Naive thymus-derived CD4-positive, alpha-beta T cell (primary cell): ENCODE measurements at regions of chr11 and their contacts with region 1.

Region 1: GRCh38 chr11:1832211-1832919 is 2.4 kb upstream of the SYT8 start:
- DNase-seq: peak; percentile 44 to 86 (median 62)
- ATAC-seq: peak; percentile 77
- H3K4me3 ChIP-seq: no peak overlapping the region
- H3K4me3 Mint-ChIP-seq: peak overlapping the region in 2 of 10 donors; percentile 20 to 42
- H3K27ac ChIP-seq: no peak overlapping the region
- H3K27ac Mint-ChIP-seq: peak overlapping the region in 1 of 9 donors; percentile 14
- H3K4me1 ChIP-seq: no peaks in the 10 kb centered on the region
- H3K4me1 Mint-ChIP-seq: peaks cover 0 to 1% (median 0%) of the 10 kb centered on the region in 7 donors
- H3K27me3 ChIP-seq: no peaks in the 10 kb centered on the region
- H3K27me3 Mint-ChIP-seq: peaks cover 0 to 11% (median 5%) of the 10 kb centered on the region in 5 donors

Region 2: DNA sequence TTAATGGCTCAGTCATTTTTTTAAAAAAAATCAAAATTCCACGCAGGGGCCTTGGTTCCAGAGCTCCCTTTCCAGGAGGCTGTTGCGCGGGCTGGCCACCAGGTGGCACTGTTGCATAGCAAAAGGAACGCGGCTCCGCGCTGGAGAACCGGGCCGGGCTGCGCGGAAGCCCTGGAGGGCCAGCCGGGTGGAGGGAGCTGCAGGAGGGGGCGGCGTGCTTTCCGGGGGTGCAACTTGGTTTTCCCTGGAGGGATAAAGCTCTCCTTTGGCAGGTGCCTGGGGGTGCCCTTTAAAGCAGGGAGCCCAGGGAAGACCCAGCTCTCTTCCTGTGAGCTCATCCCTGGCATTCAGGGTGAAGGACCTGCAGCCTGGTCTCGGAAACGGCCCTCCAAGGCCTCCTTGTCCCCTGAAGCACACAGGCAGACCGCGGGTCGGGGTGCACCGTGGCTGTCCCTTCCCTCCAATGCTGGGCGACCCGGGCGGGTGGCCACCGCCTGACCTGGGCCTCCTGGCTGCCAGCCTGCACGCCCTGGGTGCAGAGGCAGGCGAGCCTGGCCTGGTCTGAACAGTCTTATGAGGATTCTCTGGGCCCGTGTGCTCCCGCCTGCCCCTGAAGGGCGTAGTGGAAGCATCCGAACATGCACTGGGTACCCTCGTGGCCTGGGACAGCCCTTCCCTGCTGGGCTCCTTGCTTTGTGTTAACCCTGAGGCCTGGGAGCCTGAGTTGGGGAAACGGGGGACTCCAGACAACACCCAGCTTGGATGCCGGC is 179.4 kb before region 1 on chr11:
- CTCF ChIA-PET with region 1: interaction called, 37 read pairs
- POLR2A ChIA-PET with region 1: no interaction called
- intact Hi-C with region 1: loop called in 1 of 2 experiments (anchors 1 kb)
- DNase-seq: peak; percentile 54 to 87 (median 78)
- ATAC-seq: peak; percentile 93
- H3K4me3 ChIP-seq: no peak overlapping the region
- H3K4me3 Mint-ChIP-seq: no peak overlapping the region
- H3K27ac ChIP-seq: no peak overlapping the region
- H3K27ac Mint-ChIP-seq: no peak overlapping the region
- H3K4me1 ChIP-seq: no peaks in the 10 kb centered on the region
- H3K4me1 Mint-ChIP-seq: peaks cover 0 to 4% (median 0%) of the 10 kb centered on the region in 7 donors
- H3K27me3 ChIP-seq: no peaks in the 10 kb centered on the region
- H3K27me3 Mint-ChIP-seq: peaks cover 0 to 19% (median 16%) of the 10 kb centered on the region in 5 donors

Region 3: GRCh38 chr11:1701091-1701807 is 131.1 kb before region 1 on chr11:
- CTCF ChIA-PET with region 1: interaction called, 16 read pairs
- POLR2A ChIA-PET with region 1: no interaction called
- intact Hi-C with region 1: loop called in 1 of 2 experiments (anchors 1 kb)
- DNase-seq: peak in 5 of 9 donors; percentile 7 to 25 (median 21)
- ATAC-seq: peak; percentile 29
- H3K4me3 ChIP-seq: no peak overlapping the region
- H3K4me3 Mint-ChIP-seq: peak overlapping the region in 9 of 10 donors; percentile 12 to 72 (median 55)
- H3K27ac ChIP-seq: no peak overlapping the region
- H3K27ac Mint-ChIP-seq: peak overlapping the region in 8 of 9 donors; percentile 56 to 85 (median 76)
- H3K4me1 ChIP-seq: peaks cover 4 to 12% of the 10 kb centered on the region in 2 donors
- H3K4me1 Mint-ChIP-seq: peaks cover 6 to 22% (median 20%) of the 10 kb centered on the region in 7 donors
- H3K27me3 ChIP-seq: no peaks in the 10 kb centered on the region
- H3K27me3 Mint-ChIP-seq: peaks cover 0 to 12% (median 0%) of the 10 kb centered on the region in 5 donors

Region 4: DNA sequence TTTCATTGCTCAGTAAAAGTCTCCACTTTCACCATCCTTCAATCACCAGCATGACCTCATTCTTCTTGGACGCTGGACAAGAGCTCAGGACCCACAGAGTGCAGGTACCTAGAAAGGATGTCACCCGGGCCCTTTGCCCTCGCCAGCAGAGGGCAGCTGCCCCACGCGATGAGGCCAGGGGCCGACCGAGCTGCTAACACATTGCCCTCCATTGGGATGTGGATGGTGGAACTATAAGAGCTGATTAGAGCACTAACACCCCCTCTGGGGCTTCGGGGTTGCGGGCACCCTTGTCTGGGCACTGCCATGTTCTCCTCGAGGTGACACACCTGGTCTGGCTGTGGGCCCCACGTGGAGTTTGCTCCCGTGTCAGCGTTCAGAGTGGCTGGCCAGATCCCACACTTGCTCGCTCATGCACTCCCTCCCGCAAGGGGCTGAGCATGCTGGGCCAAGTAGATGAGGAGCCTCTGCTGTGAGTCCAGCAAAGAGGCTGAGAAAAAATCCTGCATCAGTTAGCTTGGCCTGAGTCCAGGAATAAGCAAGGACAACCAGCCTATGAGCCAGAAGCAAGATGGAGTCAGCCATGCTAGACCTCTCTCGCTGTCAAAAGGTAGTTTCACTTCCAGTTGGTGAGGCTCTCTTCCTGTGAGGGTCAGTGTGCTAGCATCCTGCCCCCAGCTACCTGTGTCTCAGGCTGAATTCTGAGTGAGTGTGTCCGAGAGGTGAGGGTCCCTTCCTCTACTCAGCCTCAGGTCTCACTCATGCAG is 125.5 kb before region 1 on chr11:
- CTCF ChIA-PET with region 1: interaction called, 16 read pairs
- POLR2A ChIA-PET with region 1: no interaction called
- intact Hi-C with region 1: loop called in 1 of 2 experiments (anchors 1 kb)
- DNase-seq: peak in 3 of 9 donors; percentile 11 to 29 (median 24)
- ATAC-seq: peak; percentile 57
- H3K4me3 ChIP-seq: no peak overlapping the region
- H3K4me3 Mint-ChIP-seq: no peak overlapping the region
- H3K27ac ChIP-seq: no peak overlapping the region
- H3K27ac Mint-ChIP-seq: no peak overlapping the region
- H3K4me1 ChIP-seq: no peaks in the 10 kb centered on the region
- H3K4me1 Mint-ChIP-seq: peaks cover 0 to 9% (median 4%) of the 10 kb centered on the region in 7 donors
- H3K27me3 ChIP-seq: no peaks in the 10 kb centered on the region
- H3K27me3 Mint-ChIP-seq: peaks cover 0 to 8% (median 0%) of the 10 kb centered on the region in 5 donors

Region 5: DNA sequence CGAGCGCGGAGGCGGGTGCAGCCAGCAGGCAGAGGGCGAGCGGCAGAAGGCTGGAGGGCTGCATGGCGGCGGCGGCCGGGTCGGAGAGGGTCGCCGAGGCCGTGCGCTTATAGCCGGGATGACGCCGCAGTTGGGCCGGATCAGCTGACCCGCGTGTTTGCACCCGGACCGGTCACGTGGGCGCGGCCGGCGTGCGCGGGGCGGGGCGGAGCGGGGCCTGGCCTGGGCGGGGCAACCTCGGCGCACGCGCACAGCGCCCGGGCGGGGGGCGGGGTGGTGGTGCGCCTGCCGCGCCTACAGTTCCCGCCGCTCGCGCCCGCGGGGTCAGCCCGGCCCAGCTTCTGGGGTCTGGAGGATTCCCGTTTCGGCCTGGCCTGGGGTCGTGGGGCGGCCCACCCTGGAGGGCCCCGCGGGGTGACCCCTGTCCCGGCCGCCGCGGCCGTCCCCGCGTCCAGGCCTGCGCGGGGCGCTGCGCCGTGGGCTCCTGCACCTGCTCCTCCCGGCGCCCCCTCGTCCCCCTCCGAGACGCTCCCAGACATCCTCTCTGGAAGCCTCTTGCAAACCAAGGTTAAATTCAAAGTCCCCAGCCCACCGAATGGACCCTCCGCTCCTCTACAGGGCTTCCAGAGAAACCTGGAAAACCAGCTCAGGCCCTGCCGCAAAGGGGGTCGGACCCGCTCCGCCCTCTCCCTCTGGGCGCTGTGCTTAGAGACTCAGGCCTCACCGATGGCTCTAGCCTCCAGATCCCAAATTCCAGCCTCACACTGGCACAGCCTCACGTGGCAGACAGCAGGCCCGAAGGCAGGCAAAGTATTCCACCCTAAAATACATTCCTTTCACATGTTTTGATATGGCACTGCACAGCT is 68.3 kb before region 1 on chr11 and contains the start of gene CTSD:
- CTCF ChIA-PET with region 1: no interaction called
- POLR2A ChIA-PET with region 1: no interaction called
- intact Hi-C with region 1: loop called in 1 of 2 experiments (anchors 1 kb)
- DNase-seq: peak; percentile 76 to 99 (median 83)
- ATAC-seq: peak; percentile 87
- H3K4me3 ChIP-seq: peak within 1 kb of the TSS; percentile 70
- H3K4me3 Mint-ChIP-seq: peak within 1 kb of the TSS; percentile 86 to 96 (median 91)
- H3K27ac ChIP-seq: peak within 1 kb of the TSS; percentile 82
- H3K27ac Mint-ChIP-seq: peak within 1 kb of the TSS; percentile 84 to 92 (median 87)
- H3K4me1 ChIP-seq: peaks cover 33 to 39% of the 10 kb centered on the region in 2 donors
- H3K4me1 Mint-ChIP-seq: peaks cover 14 to 41% (median 33%) of the 10 kb centered on the region in 7 donors
- H3K27me3 ChIP-seq: no peaks in the 10 kb centered on the region
- H3K27me3 Mint-ChIP-seq: no peaks in the 10 kb centered on the region
- total RNA-seq, gene CTSD: 103 to 378 (median 186) TPM

Region 6: GRCh38 chr11:2002807-2003206 is 170.4 kb after region 1 on chr11:
- CTCF ChIA-PET with region 1: interaction called, 25 read pairs
- POLR2A ChIA-PET with region 1: no interaction called
- intact Hi-C with region 1: no loop called
- DNase-seq: no peak
- ATAC-seq: peak; percentile 66
- H3K4me3 ChIP-seq: no peak overlapping the region
- H3K4me3 Mint-ChIP-seq: no peak overlapping the region
- H3K27ac ChIP-seq: no peak overlapping the region
- H3K27ac Mint-ChIP-seq: no peak overlapping the region
- H3K4me1 ChIP-seq: no peaks in the 10 kb centered on the region
- H3K4me1 Mint-ChIP-seq: no peaks in the 10 kb centered on the region
- H3K27me3 ChIP-seq: no peaks in the 10 kb centered on the region
- H3K27me3 Mint-ChIP-seq: no peaks in the 10 kb centered on the region